ENCODE measurements at regions of chr3 and their contacts with region 1.

Region 1: GRCh38 chr3:157532529-157533297 is 29.5 kb upstream of the VEPH1 start:
- DNase-seq: no peak
- ATAC-seq: peak; percentile 88 to 90

Region 2: GRCh38 chr3:157572559-157573270 is 40.0 kb after region 1 on chr3:
- intact Hi-C with region 1: loop called in 1 of 2 experiments (anchors 5 kb)
- DNase-seq: no peak
- ATAC-seq: peak; percentile 11 to 45

Region 3: GRCh38 chr3:157669416-157669815 is 136.7 kb after region 1 on chr3:
- intact Hi-C with region 1: no loop called
- DNase-seq: no peak
- ATAC-seq: no peak

Region 4: DNA sequence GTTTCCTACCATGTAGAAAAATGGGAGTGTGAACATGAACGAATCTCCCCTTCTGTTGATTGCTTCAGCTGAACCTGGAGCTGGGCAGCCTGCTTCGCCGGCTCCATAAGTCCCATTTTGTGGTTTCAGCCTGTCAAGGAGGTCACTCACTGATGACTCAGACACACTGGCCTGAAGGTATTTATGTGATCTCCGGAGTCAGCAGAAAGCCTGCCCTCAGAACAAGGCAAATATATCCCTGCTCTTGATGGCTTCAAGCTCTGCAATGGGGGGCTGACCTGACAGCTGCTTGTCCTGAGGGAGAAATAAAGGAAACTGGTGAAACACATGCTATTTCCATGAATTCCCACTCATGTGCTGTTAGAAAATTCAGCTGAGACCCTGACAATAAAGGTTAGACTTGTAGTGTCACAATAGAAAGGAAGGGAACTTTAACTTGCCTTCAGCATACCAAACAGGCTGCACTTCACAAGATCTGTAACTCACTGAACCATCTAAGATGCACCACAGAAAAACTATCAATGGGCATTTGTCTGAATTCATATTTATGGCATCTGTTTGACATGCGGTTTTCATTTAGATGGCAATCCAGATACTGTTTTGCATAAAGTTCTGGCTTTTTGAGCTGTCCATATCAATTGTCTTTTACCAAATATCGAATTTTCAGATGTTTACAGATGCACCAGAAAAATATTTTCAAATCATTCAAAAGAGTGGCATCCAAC is 252.6 kb after region 1 on chr3:
- intact Hi-C with region 1: no loop called
- DNase-seq: no peak
- ATAC-seq: peak in 1 of 2 donors; percentile 65

Region 5: GRCh38 chr3:158522221-158523136 is 989.8 kb after region 1 on chr3:
- intact Hi-C with region 1: loop called in 1 of 2 experiments (anchors 10 kb)
- DNase-seq: no peak
- ATAC-seq: no peak